ENCODE measurements at regions of chr15 and their contacts with region 1.

Region 1: GRCh38 chr15:58749532-58750337 is at the start of gene ADAM10:
- DNase-seq: peak; percentile 100
- ATAC-seq: peak; percentile 100
- H3K4me3 ChIP-seq: peak within 1 kb of the TSS; percentile 67 to 95
- H3K27ac ChIP-seq: peak within 1 kb of the TSS; percentile 84 to 97
- H3K4me1 ChIP-seq: no peaks in the 10 kb centered on the region
- H3K27me3 ChIP-seq: no peaks in the 10 kb centered on the region
- total RNA-seq, gene ADAM10: 92.8 to 115 TPM

Region 2: GRCh38 chr15:58331903-58332675 is 417.6 kb before region 1 on chr15:
- intact Hi-C with region 1: loop called in 1 of 2 experiments (anchors 1 kb)
- DNase-seq: peak; percentile 96 to 98
- ATAC-seq: peak; percentile 96
- H3K4me3 ChIP-seq: no peak overlapping the region
- H3K27ac ChIP-seq: peak overlapping the region in 1 of 2 donors; percentile 41
- H3K4me1 ChIP-seq: peaks cover 0 to 4% of the 10 kb centered on the region in 2 donors
- H3K27me3 ChIP-seq: no peaks in the 10 kb centered on the region

Region 3: DNA sequence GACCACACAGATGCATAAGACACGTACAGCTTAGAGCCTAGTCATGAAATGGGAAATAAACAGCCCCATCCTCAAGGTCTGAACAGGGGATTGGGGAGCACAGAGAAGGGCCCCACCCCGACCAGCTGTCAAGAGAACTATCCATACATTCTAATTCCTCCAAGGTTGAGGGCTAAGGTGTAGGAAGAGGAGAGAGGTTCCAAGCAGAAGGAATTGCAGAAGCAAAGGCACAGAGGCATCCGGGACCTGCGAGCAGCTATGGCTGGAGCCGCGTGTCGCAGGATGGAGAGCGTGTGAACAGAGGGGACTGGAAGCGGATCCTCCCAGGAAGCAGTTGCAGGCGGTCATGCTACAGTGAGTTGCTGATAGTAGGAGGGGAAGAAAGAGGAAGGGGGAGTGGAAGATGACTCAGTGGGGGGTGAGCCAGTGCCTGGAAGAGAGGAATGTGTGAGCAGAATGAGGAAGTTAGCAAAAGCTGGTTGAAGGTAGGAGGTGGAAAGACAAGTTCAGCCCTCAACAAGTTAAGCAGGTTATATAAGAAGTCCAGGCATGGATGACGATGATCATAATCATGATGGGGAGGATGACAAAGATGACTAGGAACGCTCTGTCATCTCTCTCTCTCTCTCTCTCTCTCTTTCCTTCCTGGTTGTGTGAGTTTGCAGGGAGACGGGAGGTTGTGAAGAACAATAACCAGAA is 228.3 kb before region 1 on chr15:
- intact Hi-C with region 1: loop called in 1 of 2 experiments (anchors 10 kb)
- DNase-seq: peak in 1 of 2 donors; percentile 83
- ATAC-seq: no peak
- H3K4me3 ChIP-seq: no peak overlapping the region
- H3K27ac ChIP-seq: peak overlapping the region in 1 of 2 donors; percentile 94
- H3K4me1 ChIP-seq: peaks cover 4 to 14% of the 10 kb centered on the region in 2 donors
- H3K27me3 ChIP-seq: no peaks in the 10 kb centered on the region

Region 4: DNA sequence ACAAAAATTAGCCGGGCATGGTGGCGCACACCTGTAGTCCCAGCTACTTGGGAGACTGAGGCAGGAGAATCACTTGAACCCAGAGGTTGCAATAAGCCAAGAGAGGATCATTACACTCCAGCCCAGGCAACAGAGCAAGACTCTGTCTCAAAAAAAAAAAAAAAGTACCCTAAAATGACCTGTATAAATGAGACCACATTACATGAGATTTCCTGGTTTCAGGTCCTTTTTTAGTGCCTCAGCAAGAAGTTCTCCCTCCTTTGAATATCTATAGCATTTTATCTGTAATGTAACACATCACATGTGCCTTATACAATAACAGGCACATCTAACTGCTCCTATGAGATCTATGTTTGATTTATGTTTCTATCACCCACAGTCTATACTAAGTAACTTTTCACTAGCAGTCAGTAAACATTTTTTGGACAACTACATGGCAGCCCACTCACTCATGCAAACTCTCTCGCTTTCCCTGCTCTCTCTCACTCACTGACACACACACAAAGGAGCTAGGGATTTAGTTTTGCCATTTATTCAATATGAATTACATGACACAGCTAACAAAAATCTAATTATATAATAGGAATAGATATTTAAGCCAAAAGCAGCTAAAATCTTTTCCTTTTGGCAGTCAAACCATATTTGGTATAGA is 34.3 kb before region 1 on chr15:
- intact Hi-C with region 1: no loop called
- DNase-seq: no peak
- ATAC-seq: no peak
- H3K4me3 ChIP-seq: no peak overlapping the region
- H3K27ac ChIP-seq: no peak overlapping the region
- H3K4me1 ChIP-seq: no peaks in the 10 kb centered on the region
- H3K27me3 ChIP-seq: no peaks in the 10 kb centered on the region

Region 5: DNA sequence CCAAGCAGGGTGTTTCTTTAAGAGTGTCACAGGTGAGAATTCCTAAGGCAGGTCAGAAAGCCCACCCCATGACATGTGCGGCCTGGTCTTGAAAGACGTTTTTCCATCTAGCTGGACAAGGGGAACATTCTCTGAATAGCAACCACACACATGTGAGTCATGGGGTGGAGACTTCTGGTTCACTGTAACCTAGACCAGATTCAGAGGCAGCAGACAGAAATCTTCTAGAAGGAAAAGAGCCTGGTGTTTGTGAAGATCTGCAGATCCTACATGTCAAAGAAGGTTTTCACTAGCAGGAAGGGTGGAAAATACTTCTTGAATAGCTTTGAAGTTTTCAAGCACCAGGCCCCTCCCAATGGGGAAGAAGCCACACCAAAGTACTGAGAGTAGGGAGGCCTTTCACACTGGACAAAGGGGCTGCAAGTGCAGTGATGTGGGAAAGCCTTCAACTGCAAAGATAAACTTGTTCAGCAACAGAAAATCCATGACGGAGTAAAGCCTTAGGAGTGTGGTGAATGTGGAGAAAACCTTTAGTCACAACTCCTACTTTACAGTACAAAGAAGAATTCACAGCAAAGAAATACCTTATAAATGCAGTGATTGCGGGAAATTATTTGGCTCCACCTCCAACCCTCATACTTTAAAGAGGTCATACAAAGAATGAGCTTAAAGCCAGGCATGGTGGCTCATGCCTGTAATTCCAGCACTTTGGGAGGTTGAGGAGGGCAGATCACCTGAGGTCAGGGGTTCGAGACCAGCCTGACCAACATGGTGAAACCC is 17.8 kb before region 1 on chr15:
- intact Hi-C with region 1: no loop called
- DNase-seq: no peak
- ATAC-seq: no peak
- H3K4me3 ChIP-seq: no peak overlapping the region
- H3K27ac ChIP-seq: peak overlapping the region in 1 of 2 donors; percentile 64
- H3K4me1 ChIP-seq: peaks cover 0 to 3% of the 10 kb centered on the region in 2 donors
- H3K27me3 ChIP-seq: no peaks in the 10 kb centered on the region

Region 6: GRCh38 chr15:58770857-58771620 is 21.3 kb after region 1 on chr15 and contains the start of gene MINDY2:
- intact Hi-C with region 1: loop called (anchors 2 kb)
- DNase-seq: peak; percentile 99 to 100
- ATAC-seq: peak; percentile 99
- H3K4me3 ChIP-seq: peak within 1 kb of the TSS; percentile 63 to 76
- H3K27ac ChIP-seq: peak within 1 kb of the TSS; percentile 44 to 89
- H3K4me1 ChIP-seq: no peaks in the 10 kb centered on the region
- H3K27me3 ChIP-seq: no peaks in the 10 kb centered on the region
- total RNA-seq, gene MINDY2: 46.3 to 48.0 TPM